K562 (cell line): ENCODE measurements at regions of chr19 and their contacts with region 1.

Region 1: DNA sequence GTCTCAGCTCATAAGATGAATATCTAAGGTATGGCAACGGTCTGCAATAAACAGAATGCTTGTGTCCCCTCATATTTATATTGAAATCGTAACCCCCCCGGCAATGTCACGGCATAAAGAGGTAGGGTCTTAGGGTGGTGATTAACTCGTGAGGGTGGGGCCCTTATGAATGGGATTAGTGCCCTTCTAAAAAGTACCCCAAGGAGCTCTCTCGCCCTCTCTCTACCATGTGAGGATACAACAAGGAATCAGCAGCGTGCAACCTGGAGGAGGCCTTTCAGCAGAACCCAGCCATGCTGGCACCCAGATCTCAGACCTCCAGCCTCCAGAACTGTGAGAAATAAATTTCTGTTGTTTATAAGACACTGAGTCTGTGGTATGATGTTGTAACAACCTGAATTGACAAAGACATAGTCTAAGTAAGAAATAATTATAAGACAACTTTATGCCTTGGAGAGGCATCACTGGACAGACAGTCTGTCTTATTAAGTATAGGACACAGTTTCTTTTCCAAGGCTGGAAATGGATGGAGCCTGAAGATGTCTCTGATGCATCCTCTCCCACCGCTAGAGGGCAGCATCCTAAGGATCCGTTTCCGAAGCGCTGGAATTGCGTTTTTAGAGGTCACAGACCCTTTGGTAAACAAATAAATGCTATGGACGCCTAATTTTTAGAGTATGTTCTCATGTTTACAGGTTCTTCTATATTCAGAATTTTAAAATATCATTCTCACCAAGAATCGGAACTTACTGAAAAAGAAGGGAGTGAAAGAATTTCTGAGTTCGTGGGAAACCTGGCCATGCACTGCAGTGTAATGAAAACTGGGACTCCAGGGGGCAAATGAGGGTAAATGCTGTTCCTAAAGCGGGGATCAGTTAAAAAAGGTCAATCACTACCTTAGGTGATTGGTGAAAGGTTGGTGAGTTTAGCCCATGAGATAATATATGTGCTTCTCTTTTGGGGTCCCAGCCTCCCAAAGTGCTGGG is 13.3 kb upstream of the LEUTX start:
- DNase-seq: peak; percentile 30 to 73 (median 58)
- ATAC-seq: peak; percentile 67; the same call in 1 of the 3 replicates
- H3K4me3 ChIP-seq: no peak overlapping the region
- H3K27ac ChIP-seq: no peak overlapping the region
- H3K4me1 ChIP-seq: no peaks in the 10 kb centered on the region
- H3K27me3 ChIP-seq: peaks cover 0 to 9% of the 10 kb centered on the region in 2 experiments; a peak in 1 of 5 replicates
- CTCF ChIP-seq: peak; percentile 74 to 79 (median 78)
- EP300 ChIP-seq: no peak
- POLR2A ChIP-seq: no peak
- RAD21 ChIP-seq: peak in 1 of 2 experiments; percentile 53; a peak in 2 of 4 replicates

Region 2: GRCh38 chr19:39557441-39558151 is 207.8 kb before region 1 on chr19:
- CTCF ChIA-PET with region 1: no interaction called
- POLR2A ChIA-PET with region 1: no interaction called
- in situ Hi-C with region 1: no loop called
- intact Hi-C with region 1: loop called (anchors 10 kb)
- DNase-seq: no peak
- ATAC-seq: peak; percentile 69
- H3K4me3 ChIP-seq: no peak overlapping the region
- H3K27ac ChIP-seq: no peak overlapping the region
- H3K4me1 ChIP-seq: no peaks in the 10 kb centered on the region
- H3K27me3 ChIP-seq: peaks cover 15 to 28% of the 10 kb centered on the region in 2 experiments; a peak in 4 of 5 replicates
- CTCF ChIP-seq: no peak
- EP300 ChIP-seq: no peak
- POLR2A ChIP-seq: no peak
- RAD21 ChIP-seq: no peak

Region 3: GRCh38 chr19:39974377-39975155 is 209.2 kb after region 1 on chr19:
- CTCF ChIA-PET with region 1: no interaction called
- POLR2A ChIA-PET with region 1: no interaction called
- in situ Hi-C with region 1: no loop called
- intact Hi-C with region 1: no loop called
- DNase-seq: no peak
- ATAC-seq: no peak
- H3K4me3 ChIP-seq: no peak overlapping the region
- H3K27ac ChIP-seq: no peak overlapping the region
- H3K4me1 ChIP-seq: peaks cover 8 to 15% of the 10 kb centered on the region in 2 experiments
- H3K27me3 ChIP-seq: no peaks in the 10 kb centered on the region
- CTCF ChIP-seq: no peak
- EP300 ChIP-seq: no peak
- POLR2A ChIP-seq: no peak
- RAD21 ChIP-seq: no peak